Natural killer cell (primary cell): ENCODE measurements at regions of chr22 and their contacts with region 1.

Region 1: DNA sequence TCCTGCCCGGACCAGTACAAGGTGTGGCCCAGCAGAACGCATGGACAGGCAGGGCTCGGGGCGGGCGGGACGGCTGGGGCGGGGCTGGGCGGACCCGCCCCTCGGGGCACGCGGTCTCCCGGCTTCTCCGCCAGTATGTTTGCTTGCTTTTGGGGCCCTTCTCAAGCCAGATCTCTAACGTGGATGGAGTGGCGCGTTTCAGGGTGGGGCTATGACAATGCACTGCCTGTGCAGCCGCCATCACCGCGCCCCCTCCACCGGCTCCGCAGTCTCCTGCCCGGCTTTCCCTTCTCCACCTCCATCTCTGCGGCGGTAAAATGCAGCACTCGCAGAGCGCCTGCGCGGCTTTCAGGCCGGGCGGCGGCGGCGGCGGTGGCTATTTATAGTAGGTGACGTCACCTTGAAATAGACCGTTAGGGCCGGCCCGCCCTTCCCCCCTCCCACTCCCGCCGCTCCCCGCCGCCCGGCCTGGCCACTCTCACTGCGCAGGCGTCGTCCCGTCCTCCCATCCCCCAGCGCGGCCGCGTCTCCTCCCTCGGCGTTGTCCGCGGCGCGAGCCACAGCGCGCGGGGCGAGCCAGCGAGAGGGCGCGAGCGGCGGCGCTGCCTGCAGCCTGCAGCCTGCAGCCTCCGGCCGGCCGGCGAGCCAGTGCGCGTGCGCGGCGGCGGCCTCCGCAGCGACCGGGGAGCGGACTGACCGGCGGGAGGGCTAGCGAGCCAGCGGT is at the start of gene YWHAH:
- DNase-seq: peak; percentile 82 to 91
- ATAC-seq: peak; percentile 75 to 88 (median 80)
- H3K4me3 ChIP-seq: peak within 1 kb of the TSS; percentile 58
- H3K4me3 Mint-ChIP-seq: peak within 1 kb of the TSS; percentile 92
- H3K27ac ChIP-seq: peak within 1 kb of the TSS; percentile 81
- H3K27ac Mint-ChIP-seq: peak within 1 kb of the TSS in 1 of 2 donors; percentile 82
- H3K4me1 ChIP-seq: peaks cover 27% of the 10 kb centered on the region
- H3K4me1 Mint-ChIP-seq: peaks cover 7 to 14% of the 10 kb centered on the region in 2 donors
- H3K27me3 ChIP-seq: no peaks in the 10 kb centered on the region
- H3K27me3 Mint-ChIP-seq: no peaks in the 10 kb centered on the region
- CTCF ChIP-seq: no peak
- total RNA-seq, gene YWHAH: 29.6 to 35.0 (median 32.8) TPM

Region 2: GRCh38 chr22:31749636-31750364 is 194.3 kb before region 1 on chr22 and contains the start of gene PRR14L:
- intact Hi-C with region 1: loop called (anchors 2 kb)
- DNase-seq: peak; percentile 97 to 99
- ATAC-seq: peak; percentile 76 to 93 (median 79)
- H3K4me3 ChIP-seq: peak within 1 kb of the TSS; percentile 92
- H3K4me3 Mint-ChIP-seq: peak within 1 kb of the TSS; percentile 98
- H3K27ac ChIP-seq: peak within 1 kb of the TSS; percentile 81
- H3K27ac Mint-ChIP-seq: peak within 1 kb of the TSS; percentile 87 to 89
- H3K4me1 ChIP-seq: peaks cover 42% of the 10 kb centered on the region
- H3K4me1 Mint-ChIP-seq: peaks cover 47 to 56% of the 10 kb centered on the region in 2 donors
- H3K27me3 ChIP-seq: no peaks in the 10 kb centered on the region
- H3K27me3 Mint-ChIP-seq: no peaks in the 10 kb centered on the region
- CTCF ChIP-seq: no peak
- total RNA-seq, gene PRR14L: 39.3 to 54.1 (median 54.0) TPM

Region 3: GRCh38 chr22:31872209-31872608 is 71.9 kb before region 1 on chr22:
- intact Hi-C with region 1: loop called (anchors 1 kb)
- DNase-seq: peak in 1 of 2 donors; percentile 40
- ATAC-seq: peak in 2 of 3 donors; percentile 37 to 55
- H3K4me3 ChIP-seq: no peak overlapping the region
- H3K4me3 Mint-ChIP-seq: no peak overlapping the region
- H3K27ac ChIP-seq: no peak overlapping the region
- H3K27ac Mint-ChIP-seq: peak overlapping the region in 1 of 2 donors; percentile 48
- H3K4me1 ChIP-seq: peaks cover 50% of the 10 kb centered on the region
- H3K4me1 Mint-ChIP-seq: peaks cover 26 to 37% of the 10 kb centered on the region in 2 donors
- H3K27me3 ChIP-seq: no peaks in the 10 kb centered on the region
- H3K27me3 Mint-ChIP-seq: no peaks in the 10 kb centered on the region
- CTCF ChIP-seq: no peak

Region 4: DNA sequence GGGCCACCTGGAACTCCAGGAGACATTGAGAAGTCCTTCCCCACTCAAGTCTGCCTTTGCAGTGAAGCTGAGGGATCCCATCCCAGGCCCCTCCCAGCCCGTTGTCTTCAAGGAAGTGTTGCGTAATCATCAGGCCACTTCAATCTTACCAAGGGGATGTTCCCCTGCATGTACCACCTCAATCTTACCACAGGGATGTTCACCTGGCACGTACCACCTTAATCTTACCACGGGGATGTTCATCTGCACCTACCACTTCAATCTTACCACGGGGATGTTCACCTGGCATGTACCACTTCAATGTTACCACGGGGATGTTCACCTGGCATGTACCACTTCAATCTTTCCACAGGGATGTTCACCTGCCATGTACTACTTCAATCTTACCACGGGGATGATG is 1222.1 kb after region 1 on chr22:
- intact Hi-C with region 1: no loop called
- DNase-seq: no peak
- ATAC-seq: no peak
- H3K4me3 ChIP-seq: no peak overlapping the region
- H3K4me3 Mint-ChIP-seq: no peak overlapping the region
- H3K27ac ChIP-seq: no peak overlapping the region
- H3K27ac Mint-ChIP-seq: no peak overlapping the region
- H3K4me1 ChIP-seq: no peaks in the 10 kb centered on the region
- H3K4me1 Mint-ChIP-seq: no peaks in the 10 kb centered on the region
- H3K27me3 ChIP-seq: no peaks in the 10 kb centered on the region
- H3K27me3 Mint-ChIP-seq: peaks cover 0 to 23% of the 10 kb centered on the region in 2 donors
- CTCF ChIP-seq: no peak